BJ (cell line): ENCODE measurements at regions of chr6 and their contacts with region 1.

Region 1: GRCh38 chr6:125207956-125208355 is 54.4 kb downstream of the TPD52L1 start:
- DNase-seq: no peak
- H3K4me3 ChIP-seq: no peak overlapping the region
- H3K27me3 ChIP-seq: no peaks in the 10 kb centered on the region
- CTCF ChIP-seq: no peak

Region 2: DNA sequence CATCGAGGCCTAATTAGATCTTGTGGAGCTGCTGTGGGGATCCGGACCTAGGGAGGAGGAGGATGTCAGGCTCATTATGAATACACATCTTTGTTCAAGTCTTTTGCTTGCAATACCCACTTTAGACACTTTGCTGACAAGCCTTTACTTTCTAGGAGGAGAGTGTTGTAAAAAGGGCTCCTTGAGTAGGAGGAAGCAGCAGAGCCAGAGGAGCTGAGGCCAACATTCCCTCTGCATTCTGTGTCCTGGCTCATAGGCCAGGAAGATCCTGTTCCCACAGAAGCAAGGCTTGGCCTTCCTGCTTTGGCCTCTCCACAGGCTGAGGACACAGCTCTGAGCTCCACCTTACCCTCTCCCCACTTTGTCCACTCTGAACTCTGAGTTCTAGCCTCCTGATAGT is 12.8 kb after region 1 on chr6:
- CTCF ChIA-PET with region 1: interaction called, 11 read pairs
- POLR2A ChIA-PET with region 1: no interaction called
- DNase-seq: no peak
- H3K4me3 ChIP-seq: no peak overlapping the region
- H3K27me3 ChIP-seq: no peaks in the 10 kb centered on the region
- CTCF ChIP-seq: no peak

Region 3: GRCh38 chr6:125571207-125571740 is 363.3 kb after region 1 on chr6:
- CTCF ChIA-PET with region 1: no interaction called
- POLR2A ChIA-PET with region 1: no interaction called
- DNase-seq: no peak
- H3K4me3 ChIP-seq: no peak overlapping the region
- H3K27me3 ChIP-seq: no peaks in the 10 kb centered on the region
- CTCF ChIP-seq: no peak